Caco-2 (cell line): ENCODE measurements at regions of chr19 and their contacts with region 1.

Region 1: DNA sequence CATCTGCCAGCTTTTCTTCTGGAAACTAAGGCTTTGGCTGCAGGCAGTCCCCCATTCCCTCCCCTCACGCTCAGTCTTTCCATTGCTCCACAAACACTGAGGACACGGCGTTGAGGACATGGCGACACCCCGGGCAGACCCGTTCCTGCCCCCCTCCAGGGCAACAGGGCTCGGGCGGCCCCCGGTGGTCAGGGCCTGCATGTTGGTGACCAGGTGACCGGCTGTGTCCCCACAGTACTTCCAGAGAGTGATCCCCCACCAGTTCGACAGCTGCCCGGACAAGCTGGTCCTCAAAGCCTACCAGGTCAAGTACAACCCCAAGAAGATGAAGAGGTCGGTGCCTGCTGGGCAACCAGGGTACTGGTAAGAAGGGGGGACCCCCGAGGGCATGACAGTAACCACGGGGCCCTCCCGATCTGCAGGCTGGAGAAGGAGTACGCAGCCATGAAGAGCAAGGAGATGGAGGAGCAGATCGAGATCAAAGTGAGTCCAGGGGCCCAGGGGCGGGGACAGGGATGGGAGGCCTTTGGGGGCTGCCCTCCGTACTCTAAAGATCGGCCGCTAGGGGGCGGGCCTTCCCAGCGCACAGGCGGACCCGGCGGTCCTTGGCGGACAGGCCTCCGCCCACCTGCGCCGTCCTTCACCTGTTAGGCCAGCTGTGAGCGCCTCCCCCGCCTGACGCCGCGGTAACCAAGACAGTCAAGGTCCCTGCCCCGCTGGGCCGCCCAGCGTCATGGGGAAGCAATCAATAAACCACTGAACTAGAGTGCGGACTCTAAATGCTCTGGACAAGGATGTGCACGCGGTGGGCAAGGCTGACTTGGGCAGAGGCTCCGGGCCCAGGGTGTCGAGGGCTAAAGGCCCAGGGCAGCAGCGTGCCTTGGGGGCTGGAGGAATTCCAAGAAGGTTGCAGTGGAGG is 21.1 kb downstream of the PRR36 start:
- DNase-seq: peak; percentile 93 to 95
- H3K4me3 ChIP-seq: 0 out of 2 replicates have a peak overlapping the region, but pooled peaks have one; percentile 14
- H3K4me3 Mint-ChIP-seq: peak overlapping the region; percentile 67
- H3K27ac Mint-ChIP-seq: peak overlapping the region; percentile 86
- H3K4me1 ChIP-seq: peaks cover 11% of the 10 kb centered on the region
- H3K4me1 Mint-ChIP-seq: peaks cover 10% of the 10 kb centered on the region
- H3K27me3 ChIP-seq: no peaks in the 10 kb centered on the region
- H3K27me3 Mint-ChIP-seq: no peaks in the 10 kb centered on the region
- CTCF ChIP-seq: peak; percentile 79 to 90

Region 2: GRCh38 chr19:7868676-7869452 is 15.8 kb after region 1 on chr19:
- CTCF ChIA-PET with region 1: interaction called, 33 read pairs
- POLR2A ChIA-PET with region 1: no interaction called
- intact Hi-C with region 1: no loop called
- DNase-seq: peak; percentile 92 to 94
- H3K4me3 ChIP-seq: peak overlapping the region; percentile 77
- H3K4me3 Mint-ChIP-seq: peak overlapping the region; percentile 87
- H3K27ac Mint-ChIP-seq: peak overlapping the region; percentile 89
- H3K4me1 ChIP-seq: peaks cover 7% of the 10 kb centered on the region
- H3K4me1 Mint-ChIP-seq: peaks cover 9% of the 10 kb centered on the region
- H3K27me3 ChIP-seq: no peaks in the 10 kb centered on the region; the same call in 1 of the 2 replicates
- H3K27me3 Mint-ChIP-seq: no peaks in the 10 kb centered on the region
- CTCF ChIP-seq: peak; percentile 53 to 71

Region 3: DNA sequence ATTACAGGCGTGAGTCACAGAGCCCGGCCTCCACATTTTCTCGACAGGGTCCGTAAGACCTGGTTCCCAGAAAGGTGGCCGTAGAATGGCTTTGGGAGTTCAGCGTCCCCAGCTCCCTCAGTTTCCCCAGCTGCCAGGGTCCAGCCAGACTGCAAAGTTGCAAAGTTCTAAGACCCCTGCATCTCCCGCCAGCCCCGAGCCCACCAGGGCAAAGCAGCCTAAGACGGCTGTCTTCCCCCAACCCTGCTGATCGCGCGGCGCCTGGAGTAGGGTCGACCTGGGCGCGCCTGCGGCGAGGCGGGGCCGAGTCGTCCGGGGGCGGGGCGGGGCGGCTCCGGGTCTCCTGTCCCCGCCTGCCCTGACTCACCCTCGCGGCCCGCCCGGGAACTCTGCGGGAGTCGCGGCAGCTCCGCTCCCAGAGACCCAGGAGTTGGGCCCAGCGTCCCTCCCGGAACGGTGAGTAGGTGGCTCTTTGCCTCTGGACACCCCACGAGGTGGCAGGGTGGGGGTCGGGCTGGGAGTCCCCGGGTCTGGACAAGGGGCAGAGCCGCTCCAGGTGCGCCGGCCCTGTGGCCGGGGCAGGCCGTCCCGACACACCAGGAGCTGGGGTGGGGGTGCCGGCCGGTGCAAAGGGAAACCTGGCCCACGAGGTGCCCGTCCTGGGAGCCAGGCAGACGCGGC is 35.2 kb after region 1 on chr19 and contains the start of gene LRRC8E:
- CTCF ChIA-PET with region 1: interaction called, 3 read pairs
- POLR2A ChIA-PET with region 1: no interaction called
- intact Hi-C with region 1: loop called (anchors 5 kb)
- DNase-seq: peak; percentile 78 to 85
- H3K4me3 ChIP-seq: peak within 1 kb of the TSS; percentile 66
- H3K4me3 Mint-ChIP-seq: peak within 1 kb of the TSS; percentile 70
- H3K27ac Mint-ChIP-seq: peak within 1 kb of the TSS; percentile 19
- H3K4me1 ChIP-seq: peaks cover 10% of the 10 kb centered on the region; the same call in 1 of the 2 replicates
- H3K4me1 Mint-ChIP-seq: no peaks in the 10 kb centered on the region
- H3K27me3 ChIP-seq: no peaks in the 10 kb centered on the region
- H3K27me3 Mint-ChIP-seq: no peaks in the 10 kb centered on the region
- CTCF ChIP-seq: peak in 1 of 2 experiments; percentile 10
- total RNA-seq, gene LRRC8E: 6.5 and 6.7 TPM in 2 replicates

Region 4: GRCh38 chr19:7903244-7904073 is 50.3 kb after region 1 on chr19 and contains the start of gene MAP2K7:
- CTCF ChIA-PET with region 1: interaction called, 4 read pairs
- POLR2A ChIA-PET with region 1: no interaction called
- intact Hi-C with region 1: loop called (anchors 1 kb)
- DNase-seq: peak; percentile 99
- H3K4me3 ChIP-seq: peak within 1 kb of the TSS; percentile 91
- H3K4me3 Mint-ChIP-seq: peak within 1 kb of the TSS; percentile 92
- H3K27ac Mint-ChIP-seq: peak within 1 kb of the TSS; percentile 89
- H3K4me1 ChIP-seq: peaks cover 12% of the 10 kb centered on the region; the same call in 1 of the 2 replicates
- H3K4me1 Mint-ChIP-seq: peaks cover 6% of the 10 kb centered on the region
- H3K27me3 ChIP-seq: no peaks in the 10 kb centered on the region
- H3K27me3 Mint-ChIP-seq: no peaks in the 10 kb centered on the region
- CTCF ChIP-seq: peak; percentile 41 to 71
- total RNA-seq, gene MAP2K7: 37.4 and 42.6 TPM in 2 replicates

Region 5: GRCh38 chr19:7912136-7912696 is 59.1 kb after region 1 on chr19:
- CTCF ChIA-PET with region 1: interaction called, 12 read pairs
- POLR2A ChIA-PET with region 1: no interaction called
- intact Hi-C with region 1: no loop called
- DNase-seq: no peak
- H3K4me3 ChIP-seq: no peak overlapping the region
- H3K4me3 Mint-ChIP-seq: no peak overlapping the region
- H3K27ac Mint-ChIP-seq: no peak overlapping the region
- H3K4me1 ChIP-seq: no peaks in the 10 kb centered on the region; the same call in 1 of the 2 replicates
- H3K4me1 Mint-ChIP-seq: no peaks in the 10 kb centered on the region
- H3K27me3 ChIP-seq: no peaks in the 10 kb centered on the region
- H3K27me3 Mint-ChIP-seq: no peaks in the 10 kb centered on the region
- CTCF ChIP-seq: no peak

Region 6: GRCh38 chr19:7919610-7920518 is 66.8 kb after region 1 on chr19 and contains the start of gene SNAPC2:
- CTCF ChIA-PET with region 1: interaction called, 21 read pairs
- POLR2A ChIA-PET with region 1: no interaction called
- intact Hi-C with region 1: loop called (anchors 1 kb)
- DNase-seq: peak; percentile 96
- H3K4me3 ChIP-seq: peak within 1 kb of the TSS; percentile 63
- H3K4me3 Mint-ChIP-seq: peak within 1 kb of the TSS; percentile 87
- H3K27ac Mint-ChIP-seq: peak within 1 kb of the TSS; percentile 83
- H3K4me1 ChIP-seq: peaks cover 16% of the 10 kb centered on the region
- H3K4me1 Mint-ChIP-seq: peaks cover 7% of the 10 kb centered on the region
- H3K27me3 ChIP-seq: no peaks in the 10 kb centered on the region
- H3K27me3 Mint-ChIP-seq: no peaks in the 10 kb centered on the region
- CTCF ChIP-seq: no peak
- total RNA-seq, gene SNAPC2: 8.8 and 10.4 TPM in 2 replicates

Region 7: GRCh38 chr19:7925171-7925851 is 72.2 kb after region 1 on chr19:
- CTCF ChIA-PET with region 1: interaction called, 21 read pairs
- POLR2A ChIA-PET with region 1: no interaction called
- intact Hi-C with region 1: loop called (anchors 1 kb)
- DNase-seq: peak; percentile 72 to 85
- H3K4me3 ChIP-seq: peak overlapping the region; percentile 28
- H3K4me3 Mint-ChIP-seq: peak overlapping the region; percentile 82
- H3K27ac Mint-ChIP-seq: no peak overlapping the region
- H3K4me1 ChIP-seq: peaks cover 23% of the 10 kb centered on the region
- H3K4me1 Mint-ChIP-seq: peaks cover 10% of the 10 kb centered on the region
- H3K27me3 ChIP-seq: no peaks in the 10 kb centered on the region
- H3K27me3 Mint-ChIP-seq: no peaks in the 10 kb centered on the region
- CTCF ChIP-seq: peak; percentile 84

Region 8: GRCh38 chr19:7997809-7998480 is 144.8 kb after region 1 on chr19:
- CTCF ChIA-PET with region 1: no interaction called
- POLR2A ChIA-PET with region 1: no interaction called
- intact Hi-C with region 1: no loop called
- DNase-seq: no peak
- H3K4me3 ChIP-seq: no peak overlapping the region
- H3K4me3 Mint-ChIP-seq: no peak overlapping the region
- H3K27ac Mint-ChIP-seq: no peak overlapping the region
- H3K4me1 ChIP-seq: peaks cover 11% of the 10 kb centered on the region; the same call in 1 of the 2 replicates
- H3K4me1 Mint-ChIP-seq: peaks cover 39% of the 10 kb centered on the region
- H3K27me3 ChIP-seq: no peaks in the 10 kb centered on the region
- H3K27me3 Mint-ChIP-seq: no peaks in the 10 kb centered on the region
- CTCF ChIP-seq: no peak

Region 9: GRCh38 chr19:8041531-8041931 is 188.4 kb after region 1 on chr19:
- CTCF ChIA-PET with region 1: no interaction called
- POLR2A ChIA-PET with region 1: no interaction called
- intact Hi-C with region 1: no loop called
- DNase-seq: no peak
- H3K4me3 ChIP-seq: no peak overlapping the region
- H3K4me3 Mint-ChIP-seq: no peak overlapping the region
- H3K27ac Mint-ChIP-seq: no peak overlapping the region
- H3K4me1 ChIP-seq: no peaks in the 10 kb centered on the region
- H3K4me1 Mint-ChIP-seq: no peaks in the 10 kb centered on the region
- H3K27me3 ChIP-seq: no peaks in the 10 kb centered on the region
- H3K27me3 Mint-ChIP-seq: no peaks in the 10 kb centered on the region
- CTCF ChIP-seq: no peak